ENCODE measurements at regions of chr6 and their contacts with region 1.

Region 1: GRCh38 chr6:168451805-168452517 is 11.0 kb downstream of the SMOC2 start:
- DNase-seq: no peak
- H3K4me3 ChIP-seq: no peak overlapping the region
- H3K27ac ChIP-seq: peak overlapping the region; percentile 7 to 35
- H3K4me1 ChIP-seq: no peaks in the 10 kb centered on the region
- H3K27me3 ChIP-seq: no peaks in the 10 kb centered on the region
- CTCF ChIP-seq: peak in 1 of 4 experiments; percentile 41
- POLR2A ChIP-seq: no peak

Region 2: GRCh38 chr6:168302534-168302933 is 149.4 kb before region 1 on chr6:
- intact Hi-C with region 1: no loop called
- DNase-seq: no peak
- H3K4me3 ChIP-seq: no peak overlapping the region
- H3K27ac ChIP-seq: no peak overlapping the region
- H3K4me1 ChIP-seq: no peaks in the 10 kb centered on the region
- H3K27me3 ChIP-seq: no peaks in the 10 kb centered on the region
- CTCF ChIP-seq: no peak
- POLR2A ChIP-seq: no peak

Region 3: DNA sequence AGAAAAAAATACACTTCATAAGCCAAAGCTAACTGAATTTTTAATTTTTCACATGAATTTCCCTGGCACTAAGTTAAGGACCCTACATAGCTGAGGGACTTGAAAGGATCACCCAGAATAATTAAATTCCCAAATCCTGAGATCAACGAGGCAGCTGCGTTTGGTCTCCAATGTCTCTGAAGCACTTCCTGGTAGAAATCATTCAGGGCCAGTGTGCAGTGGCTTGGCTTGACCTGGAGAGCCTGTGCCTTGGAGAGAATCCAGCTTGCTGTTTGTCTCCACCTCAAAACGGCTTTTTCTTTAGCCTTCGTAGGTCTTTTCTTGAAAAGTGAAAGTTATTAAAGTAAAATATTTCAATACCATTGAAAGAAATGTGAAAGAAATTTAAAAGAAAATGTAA is 81.5 kb after region 1 on chr6:
- intact Hi-C with region 1: loop called (anchors 5 kb)
- DNase-seq: no peak
- H3K4me3 ChIP-seq: no peak overlapping the region
- H3K27ac ChIP-seq: peak overlapping the region in 1 of 2 donors; percentile 14
- H3K4me1 ChIP-seq: no peaks in the 10 kb centered on the region
- H3K27me3 ChIP-seq: no peaks in the 10 kb centered on the region
- CTCF ChIP-seq: no peak
- POLR2A ChIP-seq: no peak

Measured in prostate gland (tissue), 2 donors.